ENCODE measurements at regions of chr9 and their contacts with region 1.

Region 1: GRCh38 chr9:134912126-134912968 is 5.4 kb downstream of the FCN1 start:
- DNase-seq: no peak

Region 2: GRCh38 chr9:135085830-135086546 is 173.6 kb after region 1 on chr9:
- intact Hi-C with region 1: no loop called
- DNase-seq: peak; percentile 92

Region 3: DNA sequence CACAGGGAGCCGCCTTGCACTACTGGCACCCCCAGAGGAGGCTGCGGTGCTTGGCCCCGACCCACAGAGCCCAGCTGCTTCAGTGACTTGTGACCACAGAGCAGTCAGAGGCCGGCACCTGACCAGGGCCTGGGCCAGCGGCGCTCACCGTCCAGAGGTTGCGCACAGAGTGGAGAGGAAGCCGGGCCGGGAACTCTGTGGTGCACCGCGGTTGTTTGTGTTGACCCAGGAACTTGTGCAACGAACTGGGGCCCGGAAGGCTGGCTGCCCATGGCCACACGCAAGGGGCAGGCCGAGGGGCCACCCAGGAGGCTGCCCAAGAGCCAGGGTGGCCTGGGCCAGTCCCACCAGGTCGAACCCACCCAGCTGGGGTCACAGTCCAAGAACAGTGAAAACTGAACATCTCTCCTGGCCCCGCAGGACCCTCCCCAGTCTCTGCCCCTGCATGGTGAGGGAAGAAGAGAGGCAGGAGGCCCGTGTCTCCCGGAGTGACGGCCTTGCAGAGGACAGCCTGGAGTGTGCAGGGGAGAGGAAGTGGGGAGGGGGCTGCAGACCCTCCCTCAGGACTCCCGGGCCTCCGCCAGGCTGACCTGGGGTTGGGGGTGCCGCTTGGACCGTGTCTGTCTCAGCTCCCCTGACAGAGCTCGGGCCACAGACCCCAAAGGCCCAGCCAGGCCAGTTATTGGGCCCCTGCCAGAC is 1707.5 kb after region 1 on chr9:
- intact Hi-C with region 1: loop called in 1 of 2 experiments (anchors 5 kb)
- DNase-seq: peak; percentile 95

Measured in posterior vena cava (tissue), 2 donors.